K562 (cell line): ENCODE measurements at regions of chr1 and their contacts with region 1.

Region 1: DNA sequence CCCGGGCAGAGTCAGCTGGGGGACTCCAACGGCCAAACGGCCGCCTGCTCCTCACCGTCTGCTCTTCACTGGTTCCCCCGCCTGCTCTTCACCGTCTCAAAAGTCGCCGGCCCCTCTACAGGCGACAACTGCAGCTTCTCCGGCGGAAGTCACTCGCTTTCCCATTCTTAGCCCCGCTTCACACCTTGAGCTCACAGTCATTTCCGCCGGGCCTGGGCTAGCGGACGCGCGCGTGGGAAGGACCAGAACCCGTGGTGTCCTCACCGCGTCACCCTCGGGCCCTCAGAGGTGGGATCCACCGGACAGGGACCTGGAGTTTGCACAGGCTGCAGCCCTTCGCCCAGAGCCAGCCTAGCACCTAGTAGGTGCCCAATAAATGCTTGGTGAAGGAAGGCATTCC is 27.9 kb upstream of the HJV start:
- DNase-seq: no peak
- ATAC-seq: no peak
- H3K4me3 ChIP-seq: no peak overlapping the region
- H3K27ac ChIP-seq: no peak overlapping the region
- H3K4me1 ChIP-seq: peaks cover 5 to 8% of the 10 kb centered on the region in 2 experiments; a peak in 4 of 5 replicates
- H3K27me3 ChIP-seq: no peaks in the 10 kb centered on the region
- CTCF ChIP-seq: no peak
- EP300 ChIP-seq: no peak
- POLR2A ChIP-seq: no peak
- RAD21 ChIP-seq: no peak

Region 2: DNA sequence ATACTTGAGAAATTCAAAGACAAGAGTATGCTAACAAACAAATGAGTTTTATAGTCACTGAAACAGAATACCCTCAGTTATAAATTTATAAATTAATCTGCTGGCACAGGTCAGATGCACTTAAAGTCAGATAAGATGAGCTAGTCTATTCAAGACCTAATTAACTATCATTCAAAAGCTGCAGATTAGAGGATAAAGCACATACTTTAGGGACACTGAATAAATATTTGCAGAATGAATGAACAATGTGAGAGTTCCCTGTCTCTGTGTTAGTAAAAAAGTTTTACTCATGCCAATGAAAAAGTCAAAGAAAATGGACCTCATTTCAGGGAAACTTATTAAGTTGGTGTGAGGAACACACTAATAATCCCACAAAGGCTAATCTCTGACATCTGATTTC is 283.9 kb before region 1 on chr1:
- CTCF ChIA-PET with region 1: no interaction called
- POLR2A ChIA-PET with region 1: no interaction called
- in situ Hi-C with region 1: no loop called
- intact Hi-C with region 1: no loop called
- DNase-seq: no peak
- ATAC-seq: no peak
- H3K4me3 ChIP-seq: no peak overlapping the region
- H3K27ac ChIP-seq: no peak overlapping the region
- H3K4me1 ChIP-seq: no peaks in the 10 kb centered on the region
- H3K27me3 ChIP-seq: no peaks in the 10 kb centered on the region
- CTCF ChIP-seq: no peak
- EP300 ChIP-seq: no peak
- POLR2A ChIP-seq: no peak
- RAD21 ChIP-seq: no peak

Region 3: DNA sequence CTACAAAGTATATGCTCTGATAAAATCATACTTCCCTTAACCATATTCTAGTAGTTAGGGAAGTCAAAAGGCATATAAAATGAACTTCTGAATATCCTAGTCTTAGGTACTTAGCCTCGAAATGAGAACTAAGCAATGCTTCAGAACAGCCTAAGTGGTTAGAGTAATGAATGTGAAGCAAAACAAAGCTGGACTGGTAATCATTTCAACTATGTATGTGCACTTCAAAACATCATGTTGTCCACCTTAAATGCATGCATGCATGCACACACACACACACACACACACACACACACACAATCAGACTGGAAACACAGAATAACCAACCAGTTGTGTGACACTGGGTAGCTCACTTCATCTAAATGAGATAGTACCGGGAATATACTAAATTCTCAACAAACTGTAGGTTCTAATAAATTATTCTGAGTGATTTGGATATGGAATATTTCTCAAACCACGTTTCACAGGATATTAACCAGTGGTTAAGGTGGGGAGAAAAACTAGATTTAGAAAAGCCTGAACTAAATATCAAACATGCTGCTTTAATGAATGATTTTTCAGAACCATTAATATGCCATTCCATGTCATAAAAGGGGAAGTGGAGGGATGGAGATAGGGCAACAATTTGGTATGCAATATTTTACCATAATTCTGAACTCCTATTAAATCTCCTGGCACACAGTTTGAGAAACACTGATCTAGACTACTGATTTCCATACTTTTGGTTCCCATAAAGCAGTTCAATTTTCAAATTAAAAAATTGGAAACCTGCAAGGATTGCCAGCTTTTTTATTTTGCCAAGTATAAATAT is 245.0 kb before region 1 on chr1:
- CTCF ChIA-PET with region 1: no interaction called
- POLR2A ChIA-PET with region 1: no interaction called
- in situ Hi-C with region 1: no loop called
- intact Hi-C with region 1: no loop called
- DNase-seq: no peak
- ATAC-seq: no peak; the same call in 2 of the 3 replicates
- H3K4me3 ChIP-seq: no peak overlapping the region
- H3K27ac ChIP-seq: no peak overlapping the region
- H3K4me1 ChIP-seq: no peaks in the 10 kb centered on the region; a peak in 1 of 5 replicates
- H3K27me3 ChIP-seq: no peaks in the 10 kb centered on the region
- CTCF ChIP-seq: no peak
- EP300 ChIP-seq: no peak
- POLR2A ChIP-seq: no peak
- RAD21 ChIP-seq: no peak

Region 4: GRCh38 chr1:145823565-145824498 is 225.6 kb before region 1 on chr1 and contains the starts of genes POLR3C and RNF115:
- CTCF ChIA-PET with region 1: no interaction called
- POLR2A ChIA-PET with region 1: no interaction called
- in situ Hi-C with region 1: no loop called
- intact Hi-C with region 1: no loop called
- DNase-seq: peak; percentile 87 to 93 (median 87)
- ATAC-seq: peak; percentile 93
- H3K4me3 ChIP-seq: peak within 1 kb of the TSS; percentile 77
- H3K27ac ChIP-seq: peak within 1 kb of the TSS; percentile 92
- H3K4me1 ChIP-seq: peaks cover 8 to 20% of the 10 kb centered on the region in 2 experiments
- H3K27me3 ChIP-seq: no peaks in the 10 kb centered on the region
- CTCF ChIP-seq: no peak
- EP300 ChIP-seq: no peak
- POLR2A ChIP-seq: peak; percentile 90
- RAD21 ChIP-seq: no peak
- polyA plus RNA-seq, gene POLR3C: 19.7 to 49.9 TPM
- polyA plus RNA-seq, gene RNF115: 1.9 to 2.0 TPM

Region 5: GRCh38 chr1:145957443-145958319 is 91.8 kb before region 1 on chr1 and contains the start of gene LIX1L:
- CTCF ChIA-PET with region 1: no interaction called
- POLR2A ChIA-PET with region 1: interaction called, 10 read pairs
- in situ Hi-C with region 1: no loop called
- intact Hi-C with region 1: no loop called
- DNase-seq: peak; percentile 87 to 97 (median 92)
- ATAC-seq: peak; percentile 97
- H3K4me3 ChIP-seq: peak within 1 kb of the TSS; percentile 79
- H3K27ac ChIP-seq: peak within 1 kb of the TSS; percentile 74
- H3K4me1 ChIP-seq: peaks cover 25 to 30% of the 10 kb centered on the region in 2 experiments; a peak in 4 of 5 replicates
- H3K27me3 ChIP-seq: no peaks in the 10 kb centered on the region; a peak in 1 of 5 replicates
- CTCF ChIP-seq: no peak
- EP300 ChIP-seq: no peak; the same call in 1 of the 2 replicates
- POLR2A ChIP-seq: peak; percentile 69
- RAD21 ChIP-seq: no peak
- polyA plus RNA-seq, gene LIX1L: 4.6 to 9.2 TPM

Region 6: DNA sequence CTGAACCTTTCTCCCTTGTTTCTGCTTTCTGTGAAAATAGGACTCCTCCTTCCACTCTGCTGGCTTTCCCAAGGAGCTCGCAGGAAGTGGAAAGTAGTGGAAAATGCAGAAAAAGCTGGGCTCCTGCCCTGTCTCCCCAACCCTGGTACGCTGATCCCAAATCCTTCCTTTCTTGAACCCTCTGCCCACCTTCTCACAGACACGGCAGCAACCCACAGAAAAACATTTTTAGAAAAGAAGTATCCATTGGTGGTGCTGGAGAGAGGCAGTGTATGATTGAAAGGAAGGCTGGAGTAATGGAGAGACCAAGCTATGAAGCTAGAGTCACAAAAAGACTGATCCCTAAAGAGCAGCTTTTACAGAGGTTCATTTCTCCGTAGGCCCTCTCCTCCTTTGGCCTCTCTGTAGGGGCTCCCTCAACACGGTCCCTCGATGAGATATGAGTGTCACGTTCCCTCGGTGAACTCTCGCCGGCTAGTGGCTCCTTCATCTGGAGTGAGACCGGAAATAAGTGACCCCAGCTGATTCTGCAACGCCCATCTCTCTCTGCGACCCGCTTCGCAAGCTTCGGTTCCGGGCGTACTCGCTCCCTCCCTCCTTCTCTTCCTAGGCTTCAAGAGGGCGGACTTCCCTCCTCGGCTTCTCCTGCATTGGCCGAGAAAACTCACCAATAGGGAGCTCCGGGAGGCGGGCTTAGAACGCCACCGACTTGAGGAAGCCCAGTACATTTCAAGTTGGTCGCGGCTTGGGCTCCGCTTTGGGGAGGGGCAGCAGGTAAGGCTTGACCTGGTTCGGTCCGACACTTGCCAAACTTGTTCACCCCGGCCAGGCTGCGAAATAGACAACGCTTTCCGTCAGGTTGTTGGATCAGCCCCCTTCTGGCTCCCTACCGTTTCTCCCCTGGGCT is 85.2 kb before region 1 on chr1 and contains the starts of genes ANKRD34A and POLR3GL:
- CTCF ChIA-PET with region 1: no interaction called
- POLR2A ChIA-PET with region 1: interaction called, 13 read pairs
- in situ Hi-C with region 1: no loop called
- intact Hi-C with region 1: no loop called
- DNase-seq: peak; percentile 92 to 98 (median 94)
- ATAC-seq: peak; percentile 98
- H3K4me3 ChIP-seq: peak within 1 kb of the TSS; percentile 63
- H3K27ac ChIP-seq: peak within 1 kb of the TSS; percentile 87
- H3K4me1 ChIP-seq: peaks cover 23 to 36% of the 10 kb centered on the region in 2 experiments; a peak in 4 of 5 replicates
- H3K27me3 ChIP-seq: no peaks in the 10 kb centered on the region; a peak in 1 of 5 replicates
- CTCF ChIP-seq: no peak
- EP300 ChIP-seq: no peak
- POLR2A ChIP-seq: peak; percentile 94
- RAD21 ChIP-seq: no peak
- polyA plus RNA-seq, gene ANKRD34A: 0.06 to 0.07 TPM
- polyA plus RNA-seq, gene POLR3GL: 14.6 to 21.7 TPM

Region 7: DNA sequence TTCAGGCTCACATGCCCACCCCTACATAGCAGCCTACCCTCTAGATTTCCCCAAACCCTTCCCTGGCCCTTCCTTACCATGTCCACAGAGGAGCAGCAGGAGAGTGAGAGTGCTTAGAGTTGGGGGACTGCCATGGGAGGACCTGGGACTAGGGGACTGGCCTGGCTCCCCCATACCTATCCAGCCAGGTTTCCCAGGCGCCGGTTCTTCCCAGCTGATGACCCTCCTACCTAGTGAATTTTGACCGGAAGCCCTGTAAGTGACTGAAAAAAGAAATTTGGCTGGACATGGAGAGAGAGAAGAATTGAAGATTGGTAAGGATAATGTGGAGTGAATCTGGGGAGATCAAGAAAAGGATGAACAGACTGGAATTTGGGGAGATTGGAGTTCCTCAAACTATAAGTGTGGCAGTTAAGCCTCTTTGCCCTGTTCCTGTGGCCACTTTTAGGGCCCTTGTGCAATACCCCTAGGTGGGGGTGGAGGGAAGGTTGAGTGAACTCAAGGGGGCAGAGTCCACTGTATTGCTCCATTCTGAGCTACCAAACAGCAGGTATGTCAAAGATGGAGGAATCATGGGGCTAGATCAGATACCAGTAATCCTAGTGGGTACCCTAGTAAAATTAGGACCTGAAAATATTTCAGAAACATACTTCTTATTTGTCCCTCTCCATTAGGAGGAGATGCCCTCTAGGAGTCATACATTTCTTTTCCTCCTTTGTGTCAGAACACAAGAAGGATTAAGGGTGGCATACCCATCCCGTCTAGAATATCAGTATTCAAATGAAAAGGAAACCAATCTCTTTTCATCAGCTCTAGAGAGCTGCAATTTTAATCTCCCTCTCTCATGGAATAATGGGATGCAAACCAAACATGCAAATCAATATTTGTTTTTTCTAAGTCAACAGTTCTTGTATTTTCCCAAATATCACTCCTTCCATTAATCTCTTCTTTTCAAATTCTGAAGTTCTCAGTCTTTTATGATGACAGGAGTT is 29.1 kb before region 1 on chr1:
- CTCF ChIA-PET with region 1: no interaction called
- POLR2A ChIA-PET with region 1: interaction called, 12 read pairs
- in situ Hi-C with region 1: no loop called
- intact Hi-C with region 1: no loop called
- DNase-seq: no peak
- ATAC-seq: peak; percentile 34; the same call in 2 of the 3 replicates
- H3K4me3 ChIP-seq: peak overlapping the region; percentile 22; the same call in 1 of the 2 replicates
- H3K27ac ChIP-seq: peak overlapping the region; percentile 80; the same call in 1 of the 3 replicates
- H3K4me1 ChIP-seq: peaks cover 9 to 30% of the 10 kb centered on the region in 2 experiments
- H3K27me3 ChIP-seq: no peaks in the 10 kb centered on the region
- CTCF ChIP-seq: peak in 2 of 3 experiments; percentile 20 to 21; a peak in 2 of 6 replicates
- EP300 ChIP-seq: no peak
- POLR2A ChIP-seq: no peak
- RAD21 ChIP-seq: no peak

Region 8: DNA sequence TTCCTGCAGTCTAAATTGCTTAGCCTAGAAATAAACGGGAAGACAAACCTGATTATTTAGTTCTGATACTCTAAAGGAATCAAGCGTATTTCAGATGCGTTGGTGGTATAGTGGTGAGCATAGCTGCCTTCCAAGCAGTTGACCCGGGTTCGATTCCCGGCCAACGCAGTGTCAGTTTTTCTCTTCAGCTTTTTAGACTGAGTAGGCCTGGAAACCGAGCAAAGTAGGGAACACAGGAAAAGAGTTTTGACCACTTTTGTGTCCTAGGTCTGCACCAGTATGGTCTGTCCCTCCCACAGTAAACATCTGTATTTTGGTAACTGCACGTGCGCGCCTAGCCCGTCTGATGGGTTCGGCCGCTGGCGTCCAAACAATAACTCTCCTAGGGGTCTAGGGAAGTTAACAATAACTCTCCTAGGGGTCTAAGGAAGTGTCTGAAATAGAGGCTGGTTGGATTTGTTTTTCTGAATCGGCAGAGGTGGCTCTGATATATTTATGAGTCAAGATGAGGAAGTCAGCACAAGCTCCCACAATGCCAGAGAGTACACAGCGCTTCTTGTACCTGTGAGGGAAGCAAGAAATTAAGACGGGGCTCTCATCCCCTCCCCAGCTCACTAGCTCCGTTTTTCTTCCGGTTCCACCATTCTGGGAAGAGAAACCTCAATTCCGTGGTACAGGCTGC is 12.3 kb before region 1 on chr1:
- CTCF ChIA-PET with region 1: interaction called, 3 read pairs
- POLR2A ChIA-PET with region 1: interaction called, 183 read pairs
- in situ Hi-C with region 1: no loop called
- intact Hi-C with region 1: no loop called
- DNase-seq: peak; percentile 39 to 92 (median 53)
- ATAC-seq: peak; percentile 65
- H3K4me3 ChIP-seq: peak overlapping the region; percentile 78
- H3K27ac ChIP-seq: peak overlapping the region; percentile 96
- H3K4me1 ChIP-seq: peaks cover 5 to 8% of the 10 kb centered on the region in 2 experiments; a peak in 3 of 5 replicates
- H3K27me3 ChIP-seq: no peaks in the 10 kb centered on the region
- CTCF ChIP-seq: no peak
- EP300 ChIP-seq: peak; percentile 75
- POLR2A ChIP-seq: no peak
- RAD21 ChIP-seq: peak in 1 of 2 experiments; percentile 9; a peak in 1 of 4 replicates